ENCODE measurements at regions of chr3 and their contacts with region 1.

Region 1: DNA sequence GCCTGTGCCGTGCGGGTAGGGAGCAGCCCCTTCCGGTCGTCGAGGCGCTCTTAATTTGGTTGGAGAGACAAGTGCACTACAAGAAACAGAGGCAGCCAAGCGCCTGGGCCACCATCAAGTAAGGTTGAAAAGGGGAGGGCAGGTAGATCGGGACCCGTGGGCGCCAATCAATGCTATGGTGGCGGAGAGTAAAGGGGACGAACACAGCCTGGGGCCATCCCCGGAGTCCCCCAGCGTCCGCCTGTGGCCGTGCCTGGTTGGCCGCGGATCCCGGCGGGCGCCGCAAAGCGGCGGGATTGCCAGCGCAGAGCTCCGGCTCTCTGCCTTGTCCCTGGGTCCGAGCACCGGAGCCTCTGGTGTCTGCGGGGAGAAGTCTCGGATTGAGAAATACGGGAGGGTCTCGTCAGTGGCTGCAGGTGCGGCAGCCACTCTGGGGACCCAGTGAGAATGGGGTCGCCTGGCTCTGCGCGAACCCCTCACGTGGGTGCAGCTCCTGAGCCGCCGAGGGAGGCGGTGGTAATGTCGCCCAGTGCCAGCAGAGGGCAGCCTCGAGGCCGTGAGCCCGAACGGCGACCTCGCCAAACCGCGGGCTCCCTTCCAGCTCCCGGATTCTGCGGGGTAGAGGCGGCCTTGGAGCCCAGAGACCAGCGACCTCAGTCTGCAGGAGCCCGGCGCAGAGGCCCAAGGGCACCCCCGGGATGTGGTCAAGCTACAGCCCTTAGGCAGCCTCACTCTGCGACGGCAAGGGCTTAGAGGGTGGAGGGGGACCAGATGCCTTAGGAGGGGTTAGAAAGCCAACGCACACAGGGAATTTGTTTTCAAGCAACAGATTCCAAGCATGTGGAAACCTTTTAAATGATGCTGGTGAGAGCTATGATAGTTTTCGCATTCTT is 10.8 kb downstream of the FOXL2 start:
- DNase-seq: peak in 1 of 2 donors; percentile 80
- ATAC-seq: peak; percentile 85

Region 2: GRCh38 chr3:138417559-138417982 is 518.5 kb before region 1 on chr3:
- intact Hi-C with region 1: loop called in 1 of 2 experiments (anchors 10 kb)
- DNase-seq: peak; percentile 71 to 75
- ATAC-seq: peak; percentile 94

Region 3: GRCh38 chr3:139329345-139329850 is 393.3 kb after region 1 on chr3:
- intact Hi-C with region 1: loop called in 1 of 2 experiments (anchors 5 kb)
- DNase-seq: peak; percentile 84 to 93
- ATAC-seq: peak; percentile 100